ENCODE measurements at regions of chr7 and their contacts with region 1.

Region 1: DNA sequence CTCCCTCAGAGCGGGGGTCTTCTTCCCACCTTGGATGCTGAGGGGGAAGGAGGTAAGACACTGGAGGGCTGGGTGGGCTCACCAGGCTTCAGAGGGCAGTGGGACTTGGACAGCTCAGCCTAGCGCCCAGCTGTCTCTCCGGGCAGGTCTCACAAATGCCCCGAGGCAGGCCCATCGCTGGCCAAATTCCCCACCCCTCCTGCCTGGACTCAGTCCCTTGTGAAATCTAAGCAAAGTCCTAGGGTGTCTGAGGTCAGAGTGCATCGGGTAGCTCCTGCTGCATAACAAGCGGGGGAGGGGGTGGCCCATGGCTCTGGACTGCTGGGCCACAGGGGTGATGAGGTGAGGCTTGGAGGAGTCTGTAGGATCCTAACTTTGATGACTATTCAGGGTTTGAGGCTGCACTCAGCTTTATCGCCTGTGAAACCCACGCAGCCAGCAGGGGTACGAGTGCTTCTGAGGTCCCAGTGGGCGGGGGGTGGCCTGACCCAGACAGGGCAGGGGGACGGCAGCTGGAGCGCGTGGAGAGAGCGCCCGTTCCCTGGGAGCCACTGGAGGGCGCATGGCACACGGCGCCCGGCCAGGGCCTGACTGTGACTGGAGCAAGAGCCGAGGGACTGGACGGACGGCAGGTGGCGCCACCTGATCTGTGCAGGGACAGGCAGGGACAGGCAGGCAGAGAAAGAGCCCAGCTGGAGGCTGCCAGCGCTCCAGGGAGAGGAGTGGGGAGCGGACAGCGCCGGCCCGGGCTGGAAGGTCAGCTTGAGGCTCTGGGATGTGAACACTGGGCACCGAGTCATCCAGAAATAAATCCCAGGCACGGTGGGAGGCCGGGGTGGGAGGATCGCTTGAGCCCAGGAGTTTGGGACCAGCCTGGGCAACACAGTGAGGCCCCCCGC is 10.0 kb downstream of the CYP2W1 start:
- DNase-seq: peak; percentile 98
- H3K4me3 ChIP-seq: peak overlapping the region in 1 of 2 experiments; percentile 24; a peak in 1 of 4 replicates
- H3K27ac ChIP-seq: no peak overlapping the region
- H3K4me1 ChIP-seq: peaks cover 3 to 7% of the 10 kb centered on the region in 2 experiments; a peak in 2 of 4 replicates
- H3K27me3 ChIP-seq: no peaks in the 10 kb centered on the region
- CTCF ChIP-seq: peak; percentile 100
- EP300 ChIP-seq: 0 out of 4 replicates have a peak, but pooled peaks of 1 of the 2 experiments have one; percentile 17
- RAD21 ChIP-seq: peak; percentile 100

Region 2: GRCh38 chr7:738755-739454 is 254.1 kb before region 1 on chr7:
- CTCF ChIA-PET with region 1: no interaction called
- POLR2A ChIA-PET with region 1: no interaction called
- DNase-seq: no peak
- H3K4me3 ChIP-seq: no peak overlapping the region
- H3K27ac ChIP-seq: no peak overlapping the region
- H3K4me1 ChIP-seq: no peaks in the 10 kb centered on the region
- H3K27me3 ChIP-seq: no peaks in the 10 kb centered on the region
- CTCF ChIP-seq: no peak
- EP300 ChIP-seq: no peak
- RAD21 ChIP-seq: no peak

Region 3: GRCh38 chr7:901381-902154 is 91.4 kb before region 1 on chr7:
- CTCF ChIA-PET with region 1: interaction called, 48 read pairs
- POLR2A ChIA-PET with region 1: no interaction called
- DNase-seq: peak; percentile 100
- H3K4me3 ChIP-seq: peak overlapping the region in 1 of 2 experiments; percentile 25; a peak in 1 of 4 replicates
- H3K27ac ChIP-seq: peak overlapping the region in 1 of 2 experiments; percentile 39; a peak in 1 of 4 replicates
- H3K4me1 ChIP-seq: peaks cover 14 to 19% of the 10 kb centered on the region in 2 experiments; a peak in 3 of 4 replicates
- H3K27me3 ChIP-seq: no peaks in the 10 kb centered on the region
- CTCF ChIP-seq: no peak
- EP300 ChIP-seq: no peak
- RAD21 ChIP-seq: no peak

Region 4: GRCh38 chr7:1012004-1012715 is 19.2 kb after region 1 on chr7:
- CTCF ChIA-PET with region 1: interaction called, 36 read pairs
- POLR2A ChIA-PET with region 1: no interaction called
- DNase-seq: no peak
- H3K4me3 ChIP-seq: no peak overlapping the region
- H3K27ac ChIP-seq: no peak overlapping the region
- H3K4me1 ChIP-seq: peaks cover 0 to 3% of the 10 kb centered on the region in 2 experiments; a peak in 1 of 4 replicates
- H3K27me3 ChIP-seq: no peaks in the 10 kb centered on the region
- CTCF ChIP-seq: no peak
- EP300 ChIP-seq: no peak
- RAD21 ChIP-seq: no peak

Region 5: GRCh38 chr7:1065263-1066260 is 72.6 kb after region 1 on chr7:
- CTCF ChIA-PET with region 1: interaction called, 756 read pairs
- POLR2A ChIA-PET with region 1: interaction called, 9 read pairs
- DNase-seq: peak; percentile 99
- H3K4me3 ChIP-seq: no peak overlapping the region; a peak in 1 of 4 replicates
- H3K27ac ChIP-seq: no peak overlapping the region
- H3K4me1 ChIP-seq: peaks cover 0 to 9% of the 10 kb centered on the region in 2 experiments; a peak in 1 of 4 replicates
- H3K27me3 ChIP-seq: no peaks in the 10 kb centered on the region
- CTCF ChIP-seq: peak; percentile 87
- EP300 ChIP-seq: no peak
- RAD21 ChIP-seq: peak; percentile 93

Region 6: DNA sequence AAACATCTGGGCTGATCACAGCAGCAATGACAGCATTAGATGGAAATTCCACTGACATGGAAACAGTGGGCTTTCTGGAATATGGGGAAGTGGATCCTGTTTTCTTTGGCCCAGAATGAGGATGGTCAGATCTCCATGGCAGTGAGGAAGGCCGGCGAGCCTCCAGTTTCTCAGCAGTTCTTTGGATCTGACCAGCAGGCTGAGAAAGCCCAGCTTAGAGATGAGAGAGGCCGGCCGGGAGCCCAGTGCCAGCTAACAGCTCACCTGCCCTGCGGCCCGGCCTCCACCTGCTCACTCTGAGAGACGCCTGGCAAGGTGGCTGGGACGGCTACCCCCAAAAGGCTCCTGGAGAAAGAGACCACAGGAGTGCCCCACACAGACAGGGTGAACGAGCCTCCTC is 119.2 kb after region 1 on chr7:
- CTCF ChIA-PET with region 1: interaction called, 34 read pairs
- POLR2A ChIA-PET with region 1: no interaction called
- DNase-seq: no peak
- H3K4me3 ChIP-seq: no peak overlapping the region
- H3K27ac ChIP-seq: no peak overlapping the region; a peak in 1 of 4 replicates
- H3K4me1 ChIP-seq: no peaks in the 10 kb centered on the region
- H3K27me3 ChIP-seq: no peaks in the 10 kb centered on the region
- CTCF ChIP-seq: no peak
- EP300 ChIP-seq: no peak
- RAD21 ChIP-seq: no peak

Region 7: DNA sequence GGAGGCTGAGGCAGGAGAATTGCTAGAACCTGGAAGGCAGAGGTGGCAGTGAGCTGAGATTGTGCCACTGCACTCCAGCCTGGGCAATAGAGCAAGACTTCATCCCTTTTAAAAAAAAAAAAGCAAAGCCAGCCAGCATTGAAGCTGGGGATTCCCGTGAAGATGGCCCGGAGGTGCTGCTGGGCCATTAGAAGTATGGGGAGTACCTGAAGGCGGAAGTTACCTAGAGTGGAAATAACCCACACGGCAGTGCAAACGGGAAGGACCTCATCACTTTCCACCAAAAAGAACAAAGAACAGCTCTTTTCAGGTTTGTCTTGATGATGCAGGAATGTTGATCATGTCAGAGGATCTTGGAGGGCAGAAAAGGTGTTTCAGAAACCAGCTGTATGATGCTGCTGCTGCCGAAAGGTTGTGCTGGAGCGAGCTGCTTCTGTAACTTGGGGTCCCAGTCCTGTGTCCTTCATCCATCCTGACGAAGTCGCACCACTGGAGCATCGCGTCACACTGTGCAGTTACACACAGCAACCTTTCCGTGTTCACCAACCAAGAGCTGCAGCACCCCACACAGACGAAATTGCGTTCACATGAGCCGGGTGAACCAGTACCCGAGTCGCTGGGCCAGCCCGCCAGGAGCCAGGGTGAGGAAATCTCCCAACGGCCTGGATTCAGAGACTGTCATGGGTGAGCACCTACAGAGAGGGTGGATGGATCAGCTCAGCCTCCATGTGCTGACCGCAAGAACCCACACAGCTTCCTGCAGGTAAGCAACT is 158.9 kb after region 1 on chr7:
- CTCF ChIA-PET with region 1: interaction called, 57 read pairs
- POLR2A ChIA-PET with region 1: no interaction called
- DNase-seq: no peak
- H3K4me3 ChIP-seq: no peak overlapping the region
- H3K27ac ChIP-seq: no peak overlapping the region
- H3K4me1 ChIP-seq: peaks cover 0 to 4% of the 10 kb centered on the region in 2 experiments; a peak in 2 of 4 replicates
- H3K27me3 ChIP-seq: no peaks in the 10 kb centered on the region
- CTCF ChIP-seq: no peak
- EP300 ChIP-seq: no peak
- RAD21 ChIP-seq: no peak

Region 8: GRCh38 chr7:1187127-1187526 is 194.2 kb after region 1 on chr7:
- CTCF ChIA-PET with region 1: interaction called, 21 read pairs
- POLR2A ChIA-PET with region 1: no interaction called
- DNase-seq: no peak
- H3K4me3 ChIP-seq: no peak overlapping the region
- H3K27ac ChIP-seq: no peak overlapping the region
- H3K4me1 ChIP-seq: no peaks in the 10 kb centered on the region; a peak in 1 of 4 replicates
- H3K27me3 ChIP-seq: peaks cover 62% of the 10 kb centered on the region
- CTCF ChIP-seq: no peak
- EP300 ChIP-seq: no peak
- RAD21 ChIP-seq: no peak